ENCODE measurements at regions of chr10 and their contacts with region 1.

Region 1: DNA sequence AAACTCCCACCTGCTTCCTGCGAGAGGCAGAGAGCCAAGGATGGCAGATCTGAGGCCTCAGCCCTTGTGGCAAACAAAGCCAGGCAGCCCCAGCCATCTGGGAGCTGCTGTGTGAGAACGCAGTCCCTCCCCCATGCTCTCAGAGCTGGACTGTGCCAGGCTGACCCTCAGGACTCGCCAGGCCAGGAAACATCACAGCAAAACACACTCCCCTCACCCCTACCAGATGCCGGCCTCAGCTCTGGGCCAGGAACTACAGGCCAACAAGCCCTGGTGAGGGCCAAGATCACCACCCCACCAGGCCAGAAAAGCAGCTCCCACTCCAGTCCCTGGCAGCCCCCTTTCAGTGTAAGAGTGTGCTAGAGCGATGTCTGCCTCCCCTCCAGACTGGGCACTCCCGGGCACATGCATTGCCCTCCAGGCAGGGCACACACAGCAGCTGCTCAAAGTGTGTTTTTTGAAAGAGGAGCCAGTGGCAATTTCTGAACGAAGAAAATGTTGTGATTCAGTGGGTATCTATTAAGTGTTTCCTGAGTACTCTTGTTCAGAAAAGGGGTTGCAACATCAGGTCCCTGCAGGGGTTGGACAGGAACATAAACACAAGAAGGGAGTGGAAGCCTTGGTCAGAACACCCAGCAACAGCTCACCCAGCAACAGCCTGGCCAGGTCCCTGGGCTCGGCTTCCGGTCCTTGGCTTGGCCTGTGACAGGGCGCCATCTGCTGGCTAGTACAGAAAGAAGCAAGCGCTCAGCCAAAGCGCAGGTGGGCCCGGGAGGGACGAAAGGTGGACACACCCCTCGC is 18.3 kb downstream of the LRRC20 start:
- DNase-seq: peak; percentile 80 to 96 (median 90)
- ATAC-seq: peak; percentile 97 to 100 (median 99)
- H3K4me3 ChIP-seq: no peak overlapping the region
- H3K27ac ChIP-seq: peak overlapping the region; percentile 26 to 60 (median 42)
- H3K4me1 ChIP-seq: no peaks in the 10 kb centered on the region
- H3K27me3 ChIP-seq: no peaks in the 10 kb centered on the region
- CTCF ChIP-seq: peak; percentile 79 to 87 (median 85)

Region 2: DNA sequence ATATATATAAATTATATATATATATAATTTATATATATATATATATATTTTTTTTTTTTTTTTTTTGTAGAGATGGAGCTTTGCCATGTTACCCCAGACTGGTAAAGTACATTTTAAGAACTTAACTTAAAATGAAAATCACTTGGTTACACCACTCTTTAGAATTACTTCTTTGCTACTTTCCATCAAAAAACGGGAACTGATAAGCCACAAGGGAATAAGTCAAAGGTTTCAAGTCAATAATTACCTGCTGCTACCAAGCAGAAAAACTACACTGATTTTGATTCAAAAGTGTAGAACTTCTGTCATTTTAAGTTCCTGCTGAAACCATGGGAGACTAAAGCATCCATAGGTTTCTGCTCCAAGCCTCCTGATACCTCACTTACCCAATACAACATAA is 143.1 kb before region 1 on chr10:
- intact Hi-C with region 1: loop called in 2 of 3 experiments (anchors 5 to 10 kb)
- DNase-seq: no peak
- ATAC-seq: peak in 1 of 4 donors; percentile 8
- H3K4me3 ChIP-seq: no peak overlapping the region
- H3K27ac ChIP-seq: peak overlapping the region in 1 of 4 donors; percentile 42
- H3K4me1 ChIP-seq: peaks cover 0 to 14% (median 13%) of the 10 kb centered on the region in 3 donors
- H3K27me3 ChIP-seq: no peaks in the 10 kb centered on the region
- CTCF ChIP-seq: no peak

Region 3: DNA sequence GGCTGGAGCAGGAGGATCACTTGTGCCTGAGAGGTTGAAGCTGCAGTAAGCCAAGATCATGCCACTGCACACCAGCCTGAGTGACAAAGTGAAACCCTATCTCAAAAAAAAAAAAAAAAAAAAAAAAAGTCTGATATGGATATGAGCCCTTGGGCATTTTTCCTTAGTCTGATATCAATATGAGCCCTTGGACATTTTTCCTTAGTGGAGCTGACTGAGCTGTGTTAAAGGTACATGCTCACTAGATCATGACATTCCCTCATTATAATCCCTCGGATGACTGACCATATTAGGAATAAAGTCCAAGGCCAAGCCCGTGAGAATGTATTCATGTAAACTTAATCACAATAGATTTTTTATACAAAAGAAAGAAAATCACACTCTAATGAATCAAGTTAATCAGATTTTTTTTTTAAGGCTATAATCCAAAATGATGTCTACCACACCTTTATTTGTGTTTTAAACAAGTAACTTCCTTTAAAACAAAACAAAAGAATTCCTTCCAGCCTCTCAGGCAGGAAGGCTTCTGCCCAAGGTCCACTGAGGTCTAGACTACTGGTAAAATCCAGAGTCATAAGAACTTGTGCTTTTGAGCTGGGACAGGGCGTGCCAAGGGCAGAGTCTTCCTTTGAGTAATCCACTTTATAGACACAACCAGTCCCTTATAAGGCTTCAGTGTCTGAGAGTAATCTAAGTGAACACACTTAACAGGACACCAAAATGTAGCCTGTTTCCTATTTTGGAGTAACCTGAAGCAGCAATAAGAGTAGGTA is 136.4 kb before region 1 on chr10:
- intact Hi-C with region 1: loop called in 2 of 3 experiments (anchors 5 to 10 kb)
- DNase-seq: no peak
- ATAC-seq: peak; percentile 17 to 55 (median 36)
- H3K4me3 ChIP-seq: no peak overlapping the region
- H3K27ac ChIP-seq: peak overlapping the region in 2 of 4 donors; percentile 8 to 37
- H3K4me1 ChIP-seq: peaks cover 4 to 38% (median 24%) of the 10 kb centered on the region in 3 donors
- H3K27me3 ChIP-seq: no peaks in the 10 kb centered on the region
- CTCF ChIP-seq: no peak

Measured in pancreas (tissue), 10 donors.